ENCODE measurements at regions of chr14 and their contacts with region 1.

Region 1: DNA sequence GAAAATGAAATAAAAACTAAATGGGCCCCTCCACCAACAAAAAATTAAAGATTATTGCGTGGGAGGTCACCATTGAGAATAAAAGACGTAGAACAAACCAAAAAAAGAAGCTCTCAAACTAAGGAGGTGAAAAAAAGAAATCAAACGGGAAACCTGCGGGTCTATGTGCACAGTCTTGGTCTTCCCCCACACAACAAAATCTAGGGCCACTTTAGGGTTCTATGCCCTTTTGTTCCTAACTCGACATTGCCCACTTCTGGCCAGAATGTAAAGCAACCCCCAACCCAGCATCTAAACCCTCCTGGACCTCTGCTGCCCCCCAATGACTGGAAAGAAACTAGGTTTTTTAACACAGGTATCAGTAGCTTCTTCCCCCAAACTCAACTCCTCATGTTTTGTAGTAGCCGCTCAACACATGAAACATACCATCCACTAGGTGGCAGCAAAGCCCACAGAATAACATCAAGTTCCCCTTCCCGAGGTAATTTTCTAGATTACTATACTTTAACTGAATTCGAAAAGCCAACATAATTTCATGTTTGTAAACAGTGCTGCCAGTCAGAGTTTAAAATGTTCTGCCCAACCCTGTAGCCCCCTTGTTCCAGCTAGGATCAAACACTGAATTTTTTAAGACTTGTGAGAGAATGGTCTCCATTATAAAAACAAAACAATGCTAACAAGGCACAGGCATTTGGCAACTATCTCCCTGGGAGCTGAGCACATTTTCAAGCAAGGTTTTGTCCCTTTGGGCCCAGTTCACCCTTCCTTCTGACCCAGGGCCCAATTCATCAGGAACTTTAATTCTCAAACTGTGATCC is 18.7 kb downstream of the DAD1 start:
- DNase-seq: peak in 1 of 2 donors; percentile 90
- H3K4me3 ChIP-seq: no peak overlapping the region
- H3K27ac ChIP-seq: peak overlapping the region; percentile 21 to 55
- H3K4me1 ChIP-seq: peaks cover 0 to 9% of the 10 kb centered on the region in 2 donors
- H3K27me3 ChIP-seq: no peaks in the 10 kb centered on the region
- CTCF ChIP-seq: peak; percentile 69 to 88 (median 74)

Region 2: DNA sequence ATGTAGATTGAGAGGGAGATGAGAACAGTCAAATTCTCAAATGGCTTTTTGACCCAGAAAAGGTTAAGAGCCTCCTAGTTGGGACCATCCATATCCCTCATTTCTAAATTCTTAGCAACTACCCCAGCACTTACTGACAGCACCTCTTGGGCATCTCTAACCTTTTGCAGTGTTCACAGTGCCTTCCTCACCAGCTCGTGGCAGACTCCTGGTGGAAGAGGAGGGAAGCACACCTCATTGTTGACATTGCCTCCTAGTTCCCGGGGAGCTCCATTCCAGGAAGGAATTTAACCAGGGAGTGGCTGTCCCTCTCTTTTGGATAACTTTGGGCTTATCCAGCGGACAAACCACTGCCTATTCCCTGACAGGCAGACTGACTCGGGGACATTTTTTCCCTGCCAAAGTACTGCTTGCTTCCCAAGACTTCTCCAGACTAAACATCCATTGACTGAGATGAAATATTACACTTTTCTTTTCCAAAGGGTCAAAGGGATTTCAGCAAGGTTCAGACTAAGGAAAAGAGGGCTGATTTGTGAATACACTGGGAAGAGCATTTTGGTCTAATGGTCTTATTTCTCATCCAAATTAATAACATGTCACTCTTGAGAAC is 82.8 kb after region 1 on chr14:
- intact Hi-C with region 1: loop called (anchors 1 kb)
- DNase-seq: peak in 1 of 2 donors; percentile 71
- H3K4me3 ChIP-seq: no peak overlapping the region
- H3K27ac ChIP-seq: no peak overlapping the region
- H3K4me1 ChIP-seq: peaks cover 0 to 2% of the 10 kb centered on the region in 2 donors
- H3K27me3 ChIP-seq: no peaks in the 10 kb centered on the region
- CTCF ChIP-seq: peak; percentile 51 to 67 (median 57)

Region 3: GRCh38 chr14:22713631-22713950 is 143.2 kb after region 1 on chr14:
- intact Hi-C with region 1: loop called (anchors 2 kb)
- DNase-seq: no peak
- H3K4me3 ChIP-seq: peak overlapping the region in 1 of 2 donors; percentile 29
- H3K27ac ChIP-seq: no peak overlapping the region
- H3K4me1 ChIP-seq: no peaks in the 10 kb centered on the region
- H3K27me3 ChIP-seq: no peaks in the 10 kb centered on the region
- CTCF ChIP-seq: no peak

Region 4: DNA sequence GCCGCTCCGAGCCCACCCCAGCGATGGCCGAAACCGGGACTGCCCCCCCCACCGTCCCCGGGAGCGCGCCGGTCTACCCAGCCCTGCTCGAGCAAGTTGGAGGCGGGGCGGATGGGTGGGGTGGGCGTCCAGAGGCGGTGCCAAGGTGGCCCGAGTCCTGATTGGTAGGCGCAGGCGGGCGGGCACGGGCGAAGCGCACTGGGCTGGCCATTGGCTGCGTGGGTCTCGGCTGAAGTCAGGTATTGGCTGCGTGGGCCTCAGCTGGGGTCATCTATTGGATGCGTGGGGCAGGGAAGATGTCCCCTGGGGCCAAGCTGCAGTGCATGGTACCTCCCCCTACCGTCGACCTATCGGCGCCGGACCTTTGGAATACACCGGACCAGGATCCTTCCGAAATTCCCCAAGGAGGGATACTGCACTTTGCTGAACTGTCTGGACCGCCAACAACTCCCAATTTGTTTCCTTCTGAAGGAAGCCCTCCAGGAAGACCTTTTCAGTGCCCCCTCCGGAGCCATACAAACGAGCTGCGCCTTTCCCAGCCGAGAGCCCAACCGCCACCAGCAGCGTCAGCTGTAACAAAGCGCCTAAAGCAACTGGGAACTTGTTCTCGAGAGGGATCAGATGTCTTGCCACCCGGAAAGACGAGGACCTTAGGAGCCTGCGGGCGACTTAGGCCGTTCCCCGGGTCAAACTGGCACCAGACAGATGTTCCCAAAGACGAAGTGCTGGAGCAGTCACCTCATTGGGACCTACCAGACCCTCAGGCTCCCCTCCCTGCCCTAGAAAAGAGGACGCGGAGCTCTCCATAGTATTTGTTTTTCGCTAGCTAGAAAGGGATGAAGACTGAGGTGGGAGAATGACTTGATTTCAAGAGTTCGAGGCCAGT is 715.9 kb after region 1 on chr14 and contains the start of gene HOMEZ:
- intact Hi-C with region 1: no loop called
- DNase-seq: peak; percentile 99 to 100
- H3K4me3 ChIP-seq: peak within 1 kb of the TSS; percentile 78 to 100
- H3K27ac ChIP-seq: peak within 1 kb of the TSS; percentile 95 to 99
- H3K4me1 ChIP-seq: peaks cover 0 to 11% of the 10 kb centered on the region in 2 donors
- H3K27me3 ChIP-seq: no peaks in the 10 kb centered on the region
- CTCF ChIP-seq: peak in 2 of 3 experiments; percentile 10
- total RNA-seq, gene HOMEZ: 7.3 TPM